CD4-positive, alpha-beta memory T cell (primary cell): ENCODE measurements at regions of chr6 and their contacts with region 1.

Region 1: GRCh38 chr6:1604158-1605030 is 5.3 kb upstream of the FOXC1 start:
- DNase-seq: peak in 4 of 5 donors; percentile 60 to 71 (median 63)
- H3K4me3 ChIP-seq: no peak overlapping the region
- H3K4me3 Mint-ChIP-seq: peak overlapping the region in 1 of 8 donors; percentile 60
- H3K27ac ChIP-seq: no peak overlapping the region
- H3K27ac Mint-ChIP-seq: peak overlapping the region in 1 of 7 donors; percentile 42
- H3K4me1 ChIP-seq: peaks cover 44% of the 10 kb centered on the region
- H3K4me1 Mint-ChIP-seq: peaks cover 20 to 45% (median 28%) of the 10 kb centered on the region in 4 donors
- H3K27me3 ChIP-seq: peaks cover 71% of the 10 kb centered on the region
- H3K27me3 Mint-ChIP-seq: peaks cover 70% of the 10 kb centered on the region in 2 donors

Region 2: DNA sequence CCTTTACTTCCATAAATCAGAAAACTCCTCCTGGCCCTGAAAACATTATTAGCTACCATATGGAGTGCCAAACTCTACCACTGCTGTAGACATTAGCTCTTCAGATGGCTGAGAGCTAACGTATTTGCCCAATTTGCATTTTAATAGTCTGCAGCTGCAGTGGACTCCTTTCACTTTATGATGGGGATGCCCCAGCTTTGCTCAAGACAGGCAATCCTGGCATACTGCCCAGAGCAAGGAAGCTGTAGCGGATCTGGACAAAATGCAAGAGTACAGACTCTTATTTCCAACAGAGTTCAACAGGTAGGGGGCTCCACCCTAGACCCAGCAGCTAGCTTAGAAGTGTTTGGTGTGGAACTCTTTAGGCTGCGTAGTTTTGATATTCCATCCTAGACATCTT is 252.0 kb after region 1 on chr6:
- CTCF ChIA-PET with region 1: no interaction called
- POLR2A ChIA-PET with region 1: no interaction called
- intact Hi-C with region 1: no loop called
- DNase-seq: no peak
- H3K4me3 ChIP-seq: no peak overlapping the region
- H3K4me3 Mint-ChIP-seq: no peak overlapping the region
- H3K27ac ChIP-seq: no peak overlapping the region
- H3K27ac Mint-ChIP-seq: no peak overlapping the region
- H3K4me1 ChIP-seq: no peaks in the 10 kb centered on the region
- H3K4me1 Mint-ChIP-seq: no peaks in the 10 kb centered on the region
- H3K27me3 ChIP-seq: no peaks in the 10 kb centered on the region
- H3K27me3 Mint-ChIP-seq: no peaks in the 10 kb centered on the region

Region 3: DNA sequence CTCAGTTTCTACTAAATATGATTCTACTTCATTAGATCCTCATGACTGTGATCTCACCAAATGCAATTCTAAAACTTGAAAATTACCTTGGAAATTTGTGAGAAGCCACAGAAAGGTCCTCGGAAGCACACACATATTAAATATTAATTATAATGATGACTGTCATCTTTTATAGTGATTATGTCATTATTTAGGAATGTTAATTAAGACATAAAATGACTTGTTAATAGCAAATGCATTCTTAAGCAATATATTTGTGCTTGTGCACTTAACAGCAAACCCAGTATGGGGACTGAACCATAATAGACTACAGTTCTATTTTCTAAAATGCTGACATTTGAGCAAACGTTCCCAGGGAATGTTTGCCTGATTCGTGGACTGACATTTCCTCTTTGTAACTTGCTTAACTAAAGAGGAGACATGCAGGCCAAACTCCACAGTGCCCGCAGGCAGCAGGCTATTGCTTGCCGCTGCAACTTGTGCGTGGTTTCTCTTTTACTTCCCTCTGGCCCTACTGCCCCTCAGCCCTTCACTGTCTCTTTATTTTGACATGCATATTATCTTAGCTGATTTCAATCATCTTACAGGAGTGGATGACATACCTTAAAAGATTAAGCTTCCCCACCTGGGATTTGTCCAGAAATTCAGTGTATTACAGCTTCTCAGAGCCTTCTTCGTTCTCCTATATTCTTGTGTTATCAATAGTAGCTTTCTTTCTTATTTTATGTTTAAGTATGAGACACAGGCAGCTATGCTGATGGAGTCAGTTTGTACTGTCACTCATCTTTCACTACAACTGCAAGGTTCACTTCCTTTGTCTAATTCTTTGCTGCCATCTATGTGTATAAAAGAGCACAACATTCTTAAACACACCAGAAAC is 499.5 kb after region 1 on chr6:
- CTCF ChIA-PET with region 1: interaction called, 38 read pairs
- POLR2A ChIA-PET with region 1: no interaction called
- intact Hi-C with region 1: no loop called
- DNase-seq: peak in 4 of 5 donors; percentile 20 to 31 (median 30)
- H3K4me3 ChIP-seq: no peak overlapping the region
- H3K4me3 Mint-ChIP-seq: no peak overlapping the region
- H3K27ac ChIP-seq: no peak overlapping the region
- H3K27ac Mint-ChIP-seq: no peak overlapping the region
- H3K4me1 ChIP-seq: no peaks in the 10 kb centered on the region
- H3K4me1 Mint-ChIP-seq: no peaks in the 10 kb centered on the region
- H3K27me3 ChIP-seq: no peaks in the 10 kb centered on the region
- H3K27me3 Mint-ChIP-seq: no peaks in the 10 kb centered on the region

Region 4: DNA sequence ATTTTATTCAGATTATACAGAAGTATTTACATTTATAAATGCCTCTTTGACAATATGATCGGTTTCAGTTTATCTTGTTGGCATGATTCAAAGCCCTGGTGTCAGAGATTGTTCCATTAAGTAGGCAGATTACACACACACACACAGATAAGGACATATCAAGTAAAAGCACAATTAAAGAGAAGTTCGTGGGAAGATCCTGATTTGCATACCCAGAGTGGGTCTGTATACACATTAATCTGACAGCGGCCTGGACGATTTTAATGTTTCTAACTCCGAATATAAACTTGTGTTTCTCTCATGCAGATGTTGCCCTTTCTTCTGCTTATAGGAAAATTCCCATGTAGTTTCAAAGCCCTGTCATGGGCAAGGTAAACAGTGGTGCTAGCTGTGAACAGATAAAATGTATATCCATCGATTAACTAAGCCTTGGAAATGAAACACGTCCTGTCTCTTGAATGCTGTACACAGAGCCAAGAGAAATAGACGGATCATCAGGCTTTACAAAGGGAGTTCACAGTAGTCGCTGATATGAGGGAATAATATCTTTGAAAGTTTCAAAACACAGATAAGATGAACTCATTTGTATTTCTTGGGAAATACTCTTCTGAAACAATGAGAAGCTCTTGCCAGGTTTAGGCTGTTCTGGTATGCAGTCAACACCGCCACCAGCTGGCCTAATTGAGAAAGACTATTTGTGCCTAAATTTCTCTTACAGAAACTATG is 749.2 kb after region 1 on chr6:
- CTCF ChIA-PET with region 1: interaction called, 17 read pairs
- POLR2A ChIA-PET with region 1: no interaction called
- intact Hi-C with region 1: loop called (anchors 1 kb)
- DNase-seq: peak; percentile 26 to 41 (median 31)
- H3K4me3 ChIP-seq: no peak overlapping the region
- H3K4me3 Mint-ChIP-seq: no peak overlapping the region
- H3K27ac ChIP-seq: no peak overlapping the region
- H3K27ac Mint-ChIP-seq: no peak overlapping the region
- H3K4me1 ChIP-seq: no peaks in the 10 kb centered on the region
- H3K4me1 Mint-ChIP-seq: no peaks in the 10 kb centered on the region
- H3K27me3 ChIP-seq: no peaks in the 10 kb centered on the region
- H3K27me3 Mint-ChIP-seq: no peaks in the 10 kb centered on the region